ENCODE measurements at regions of chr3 and their contacts with region 1.

Region 1: GRCh38 chr3:98705706-98706105 is 57.4 kb upstream of the ST3GAL6 start:
- DNase-seq: no peak
- H3K4me3 ChIP-seq: no peak overlapping the region
- H3K27ac ChIP-seq: no peak overlapping the region
- H3K27me3 ChIP-seq: no peaks in the 10 kb centered on the region
- CTCF ChIP-seq: 0 out of 2 replicates have a peak, but pooled peaks have one; percentile 8

Region 2: DNA sequence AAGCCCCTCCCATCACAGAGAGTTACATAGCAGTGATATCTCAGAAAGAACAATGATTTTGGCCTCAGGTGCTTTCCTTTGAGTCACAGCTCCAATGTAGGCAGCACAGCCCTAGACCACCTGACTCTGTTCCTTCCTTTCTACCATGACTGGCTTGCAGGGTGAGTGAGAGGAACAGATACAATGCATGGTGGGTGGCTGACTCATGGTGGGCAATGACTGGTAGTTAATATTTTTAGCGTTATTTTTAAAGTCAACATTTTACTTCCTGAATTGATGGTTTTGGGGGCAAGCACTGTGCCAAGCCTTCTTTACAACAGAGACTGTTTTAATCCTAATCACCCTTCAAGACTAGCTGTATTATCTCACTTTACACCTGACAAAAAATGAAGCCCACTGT is 24.6 kb after region 1 on chr3:
- CTCF ChIA-PET with region 1: interaction called, 4 read pairs
- POLR2A ChIA-PET with region 1: interaction called, 10 read pairs
- DNase-seq: no peak
- H3K4me3 ChIP-seq: no peak overlapping the region
- H3K27ac ChIP-seq: no peak overlapping the region
- H3K27me3 ChIP-seq: no peaks in the 10 kb centered on the region
- CTCF ChIP-seq: no peak